HepG2 (cell line): ENCODE measurements at regions of chr6 and their contacts with region 1.

Region 1: DNA sequence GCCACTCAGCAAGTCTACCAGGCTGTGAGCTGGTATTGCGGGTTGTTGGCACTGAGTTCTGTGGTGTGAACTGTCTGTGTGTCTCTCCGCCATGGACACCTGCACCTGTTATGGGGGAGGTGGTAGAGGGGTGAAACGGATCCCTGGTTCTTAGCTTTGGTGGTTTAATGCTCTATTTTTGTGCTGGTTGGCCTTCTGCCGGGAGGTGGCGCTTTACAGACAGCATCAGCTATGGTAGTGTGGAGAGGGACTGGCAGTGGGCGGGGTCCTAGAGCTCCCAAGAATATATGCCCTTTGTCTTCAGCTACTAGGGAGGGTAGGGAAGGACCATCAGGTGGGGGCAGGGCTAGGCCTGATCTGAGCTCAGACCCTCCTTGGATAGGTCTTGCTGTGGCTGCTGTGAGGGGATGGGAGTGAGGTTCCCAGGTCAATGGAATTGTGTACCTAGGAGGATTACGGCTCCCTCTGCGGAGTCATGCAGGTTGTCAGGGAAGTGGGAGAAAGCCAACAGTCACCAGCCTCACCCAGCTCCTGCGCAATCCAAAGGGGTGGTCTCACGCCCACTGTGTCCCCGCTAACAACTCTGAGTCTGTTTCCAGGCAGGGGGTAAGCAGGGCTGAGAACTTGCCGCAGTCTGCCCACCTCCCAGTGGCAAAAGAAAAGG is 154.3 kb downstream of the CCDC170 start:
- DNase-seq: peak; percentile 56
- ATAC-seq: peak; percentile 88
- H3K4me3 ChIP-seq: no peak overlapping the region
- H3K27ac ChIP-seq: no peak overlapping the region
- H3K4me1 ChIP-seq: peaks cover 39% of the 10 kb centered on the region
- H3K27me3 ChIP-seq: no peaks in the 10 kb centered on the region
- CTCF ChIP-seq: peak; percentile 83
- EP300 ChIP-seq: no peak
- POLR2A ChIP-seq: no peak
- RAD21 ChIP-seq: peak; percentile 66; the same call in 1 of the 2 replicates

Region 2: GRCh38 chr6:151409260-151409659 is 238.8 kb before region 1 on chr6:
- CTCF ChIA-PET with region 1: no interaction called
- POLR2A ChIA-PET with region 1: no interaction called
- in situ Hi-C with region 1: no loop called
- intact Hi-C with region 1: no loop called
- DNase-seq: no peak
- ATAC-seq: no peak
- H3K4me3 ChIP-seq: no peak overlapping the region
- H3K27ac ChIP-seq: no peak overlapping the region
- H3K4me1 ChIP-seq: no peaks in the 10 kb centered on the region
- H3K27me3 ChIP-seq: no peaks in the 10 kb centered on the region
- CTCF ChIP-seq: no peak
- EP300 ChIP-seq: no peak
- POLR2A ChIP-seq: no peak
- RAD21 ChIP-seq: no peak

Region 3: DNA sequence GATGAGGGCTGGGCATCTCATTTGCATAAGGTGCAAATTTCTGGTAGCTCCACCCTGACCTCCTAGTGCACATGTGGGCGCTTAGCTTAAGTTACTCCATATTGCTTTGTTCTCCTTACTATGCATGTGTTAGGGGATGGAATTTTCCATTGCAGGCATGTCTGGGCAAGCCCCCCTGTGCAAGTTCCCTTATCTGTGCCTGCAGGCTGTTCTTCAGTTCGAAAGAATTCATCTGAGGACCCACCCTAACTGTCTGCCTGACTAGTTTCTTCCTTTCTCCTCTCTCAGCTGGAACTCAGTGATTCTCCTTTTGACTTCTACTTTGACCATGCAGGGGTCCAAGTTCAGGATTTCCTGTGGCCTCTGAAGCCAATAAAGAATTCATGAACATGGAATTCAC is 124.0 kb before region 1 on chr6:
- CTCF ChIA-PET with region 1: no interaction called
- POLR2A ChIA-PET with region 1: no interaction called
- in situ Hi-C with region 1: no loop called
- intact Hi-C with region 1: no loop called
- DNase-seq: no peak
- ATAC-seq: no peak
- H3K4me3 ChIP-seq: no peak overlapping the region
- H3K27ac ChIP-seq: no peak overlapping the region
- H3K4me1 ChIP-seq: no peaks in the 10 kb centered on the region
- H3K27me3 ChIP-seq: no peaks in the 10 kb centered on the region
- CTCF ChIP-seq: no peak
- EP300 ChIP-seq: no peak
- POLR2A ChIP-seq: no peak
- RAD21 ChIP-seq: no peak

Region 4: DNA sequence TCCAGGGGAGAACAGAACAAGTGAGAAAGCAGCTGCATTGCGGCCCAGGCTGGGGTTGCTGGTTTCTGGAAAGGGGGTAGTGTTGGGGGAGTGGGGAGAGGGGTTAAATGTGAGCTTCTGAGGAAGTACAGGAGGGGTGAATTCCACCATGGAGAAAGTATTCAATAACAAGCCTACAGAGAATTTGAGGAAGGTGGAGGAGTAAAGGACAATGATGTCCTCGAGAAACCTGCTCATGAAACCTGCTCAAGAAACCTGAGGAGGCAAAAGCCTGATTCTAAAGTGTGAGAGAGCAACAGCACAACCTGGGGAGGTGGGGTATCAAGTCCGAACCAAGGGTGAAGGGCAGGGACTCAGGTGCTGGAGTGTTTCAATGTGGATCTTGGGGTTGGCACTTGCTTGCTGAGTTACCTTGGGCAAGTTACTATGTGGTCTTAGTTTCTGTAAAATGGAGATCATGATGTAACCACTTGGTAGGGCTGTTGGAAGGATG is 21.1 kb after region 1 on chr6:
- CTCF ChIA-PET with region 1: no interaction called
- POLR2A ChIA-PET with region 1: interaction called, 11 read pairs
- in situ Hi-C with region 1: no loop called
- intact Hi-C with region 1: no loop called
- DNase-seq: no peak
- ATAC-seq: peak; percentile 13; the same call in 2 of the 3 replicates
- H3K4me3 ChIP-seq: peak overlapping the region in 1 of 3 experiments; percentile 44; a peak in 3 of 6 replicates
- H3K27ac ChIP-seq: peak overlapping the region; percentile 83
- H3K4me1 ChIP-seq: peaks cover 42% of the 10 kb centered on the region
- H3K27me3 ChIP-seq: no peaks in the 10 kb centered on the region
- CTCF ChIP-seq: no peak
- EP300 ChIP-seq: no peak
- POLR2A ChIP-seq: no peak
- RAD21 ChIP-seq: no peak

Region 5: DNA sequence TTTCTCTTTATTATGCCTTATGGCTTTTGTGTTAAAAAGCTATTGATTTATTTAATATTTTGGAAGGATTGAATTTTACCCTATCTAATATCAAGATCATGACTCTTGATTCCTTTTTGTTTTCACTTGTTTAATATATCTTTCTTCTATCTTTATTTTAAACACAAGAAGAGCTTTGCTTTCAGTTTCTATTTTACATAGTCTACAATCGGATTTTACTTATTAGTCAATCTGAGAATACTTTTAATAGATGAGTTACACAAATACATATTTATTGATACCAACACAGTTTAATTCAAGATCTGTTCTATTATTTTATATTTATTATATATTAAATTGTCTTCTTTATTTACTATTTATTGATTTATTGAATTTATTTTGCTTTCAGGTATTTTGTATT is 378.2 kb after region 1 on chr6:
- CTCF ChIA-PET with region 1: no interaction called
- POLR2A ChIA-PET with region 1: no interaction called
- in situ Hi-C with region 1: no loop called
- intact Hi-C with region 1: no loop called
- DNase-seq: no peak
- ATAC-seq: no peak
- H3K4me3 ChIP-seq: no peak overlapping the region
- H3K27ac ChIP-seq: no peak overlapping the region
- H3K4me1 ChIP-seq: no peaks in the 10 kb centered on the region
- H3K27me3 ChIP-seq: no peaks in the 10 kb centered on the region
- CTCF ChIP-seq: no peak
- EP300 ChIP-seq: no peak
- POLR2A ChIP-seq: no peak
- RAD21 ChIP-seq: no peak